CD4-positive, alpha-beta memory T cell (primary cell): ENCODE measurements at regions of chr19 and their contacts with region 1.

Region 1: DNA sequence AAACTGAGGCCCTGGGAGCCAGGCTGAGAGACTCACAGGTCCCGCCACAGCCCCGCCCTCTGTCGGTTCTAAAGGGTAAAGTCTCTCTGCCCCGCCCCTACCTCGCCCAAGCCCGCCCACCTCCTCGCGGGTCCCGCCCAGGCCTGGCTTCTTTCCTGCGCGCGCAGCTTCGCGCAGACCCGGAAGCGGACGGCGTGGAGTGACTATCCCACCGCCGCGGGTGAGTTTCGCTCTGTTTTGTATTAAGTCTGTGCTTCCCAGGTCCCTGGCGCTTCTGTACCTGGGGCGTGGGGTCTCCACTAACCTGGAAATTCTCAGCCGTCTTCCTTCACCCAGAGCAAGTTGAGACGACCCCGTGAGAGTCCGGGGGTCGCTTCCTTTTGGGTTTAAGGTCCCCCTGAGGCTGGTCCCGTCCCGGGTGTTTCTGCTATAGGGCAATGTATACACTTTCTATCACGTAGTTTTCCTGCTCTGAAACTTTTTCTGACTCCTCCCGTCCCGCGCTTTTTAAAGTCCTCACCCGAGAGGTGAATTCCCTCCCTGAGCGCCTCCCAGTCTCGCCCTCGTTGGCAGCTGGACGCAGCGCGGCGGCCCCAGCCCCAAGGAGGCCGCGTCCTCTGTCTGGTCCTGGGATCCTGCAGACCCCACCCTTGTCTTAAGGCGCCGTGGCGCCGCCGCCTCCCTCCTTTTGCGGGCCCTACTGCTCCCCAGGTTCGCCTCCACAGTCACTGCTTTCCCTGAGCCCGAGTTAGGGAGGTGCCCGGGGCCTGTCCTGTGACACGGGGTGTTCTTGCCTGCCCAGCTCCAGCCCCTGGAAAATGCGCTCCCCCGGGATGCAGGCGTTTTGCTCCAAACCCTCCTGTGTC is at the start of gene ZNF765:
- DNase-seq: peak; percentile 93 to 98 (median 95)
- H3K4me3 ChIP-seq: peak within 1 kb of the TSS; percentile 69 to 70
- H3K4me3 Mint-ChIP-seq: peak within 1 kb of the TSS; percentile 92 to 99 (median 98)
- H3K27ac ChIP-seq: peak within 1 kb of the TSS; percentile 75
- H3K27ac Mint-ChIP-seq: peak within 1 kb of the TSS; percentile 91 to 98 (median 96)
- H3K4me1 ChIP-seq: peaks cover 20% of the 10 kb centered on the region
- H3K4me1 Mint-ChIP-seq: peaks cover 18 to 41% (median 29%) of the 10 kb centered on the region in 4 donors
- H3K27me3 ChIP-seq: no peaks in the 10 kb centered on the region
- H3K27me3 Mint-ChIP-seq: no peaks in the 10 kb centered on the region
- total RNA-seq, gene ZNF765: 20.9 to 21.6 TPM

Region 2: DNA sequence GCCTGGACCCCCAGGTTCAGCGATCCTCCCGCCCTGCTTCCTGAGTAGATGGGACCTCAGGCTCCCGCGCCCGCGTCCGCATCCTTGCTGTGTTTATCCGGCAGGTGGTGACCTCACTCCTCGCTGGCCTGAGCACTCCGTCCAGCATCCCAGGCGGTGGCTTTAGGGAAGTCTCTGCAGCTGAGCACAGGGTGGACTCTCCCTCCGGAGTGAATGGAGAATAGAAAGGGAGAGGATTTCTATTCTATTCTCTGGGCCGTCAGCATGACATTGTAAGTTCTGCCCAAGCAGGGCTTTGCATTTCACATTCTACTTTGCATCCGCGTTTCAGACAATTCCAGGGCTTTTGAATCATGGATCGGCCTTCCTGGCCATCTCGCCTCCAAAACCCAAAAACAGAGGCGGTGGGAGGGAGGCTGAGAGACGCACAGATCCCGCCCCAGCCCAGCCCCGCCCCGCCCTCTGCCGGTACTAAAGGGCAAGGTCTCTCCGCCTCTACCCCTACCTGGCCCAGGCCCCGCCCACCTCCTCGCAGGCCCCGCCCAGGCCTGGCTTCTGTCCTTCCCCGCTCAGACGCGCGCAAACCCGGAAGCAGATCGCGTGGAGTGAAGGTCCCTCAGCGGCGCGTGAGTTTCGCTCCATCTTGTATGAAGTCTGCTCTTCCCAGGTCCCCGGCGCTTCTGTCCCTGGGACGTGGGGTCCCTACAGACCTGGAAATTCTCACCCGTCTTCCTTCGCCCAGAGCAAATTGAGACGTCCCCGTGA is 29.9 kb before region 1 on chr19 and contains the start of gene ZNF525:
- CTCF ChIA-PET with region 1: no interaction called
- POLR2A ChIA-PET with region 1: no interaction called
- intact Hi-C with region 1: loop called (anchors 1 kb)
- DNase-seq: peak; percentile 93 to 97 (median 96)
- H3K4me3 ChIP-seq: peak within 1 kb of the TSS; percentile 57 to 87
- H3K4me3 Mint-ChIP-seq: peak within 1 kb of the TSS; percentile 95 to 99 (median 96)
- H3K27ac ChIP-seq: peak within 1 kb of the TSS; percentile 70
- H3K27ac Mint-ChIP-seq: peak within 1 kb of the TSS; percentile 90 to 98 (median 97)
- H3K4me1 ChIP-seq: peaks cover 6% of the 10 kb centered on the region
- H3K4me1 Mint-ChIP-seq: peaks cover 15 to 38% (median 21%) of the 10 kb centered on the region in 4 donors
- H3K27me3 ChIP-seq: no peaks in the 10 kb centered on the region
- H3K27me3 Mint-ChIP-seq: no peaks in the 10 kb centered on the region
- total RNA-seq, gene ZNF525: 36.5 to 36.6 TPM

Region 3: DNA sequence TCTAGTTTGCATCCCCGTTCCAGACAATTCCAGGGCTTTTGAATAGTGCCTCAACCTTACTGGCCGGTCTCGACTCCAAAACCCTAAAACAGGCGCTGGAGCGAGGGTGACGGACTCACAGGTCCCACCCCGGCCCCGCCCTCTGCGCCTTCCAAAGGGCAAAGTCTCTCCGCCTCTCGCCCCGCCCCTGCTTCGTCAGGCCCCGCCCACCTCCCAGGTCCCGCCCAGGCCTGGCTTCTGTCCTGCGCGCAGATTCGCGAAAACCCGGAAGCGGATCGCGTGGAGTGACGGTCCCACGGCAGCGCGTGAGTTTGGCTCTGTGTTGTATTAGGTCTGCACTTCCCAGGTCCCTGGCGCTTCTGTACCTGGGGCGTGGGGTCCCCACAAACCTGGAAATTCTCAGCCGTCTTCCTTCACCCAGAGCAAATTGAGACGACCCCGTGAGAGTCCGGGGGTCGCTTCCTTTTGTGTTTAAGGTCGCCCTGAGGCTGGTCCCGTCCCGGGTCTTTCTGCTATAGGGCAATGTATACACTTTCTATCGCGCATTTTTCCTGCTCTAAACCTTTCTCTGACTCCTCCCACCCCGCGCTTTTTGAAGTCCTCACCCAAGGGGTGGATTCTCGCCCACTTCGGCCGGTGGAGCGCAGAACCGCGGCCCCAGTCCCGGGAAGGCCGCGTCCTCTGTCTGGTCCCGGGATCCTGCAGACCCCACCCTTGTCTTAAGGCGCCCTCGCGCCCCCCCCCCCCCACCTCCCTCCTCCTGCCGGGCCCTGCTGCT is 72.5 kb after region 1 on chr19 and contains the start of gene ZNF813:
- CTCF ChIA-PET with region 1: no interaction called
- POLR2A ChIA-PET with region 1: no interaction called
- intact Hi-C with region 1: loop called (anchors 1 kb)
- DNase-seq: peak; percentile 88 to 96 (median 91)
- H3K4me3 ChIP-seq: peak within 1 kb of the TSS; percentile 57 to 62
- H3K4me3 Mint-ChIP-seq: peak within 1 kb of the TSS; percentile 89 to 96 (median 93)
- H3K27ac ChIP-seq: peak within 1 kb of the TSS; percentile 51
- H3K27ac Mint-ChIP-seq: peak within 1 kb of the TSS; percentile 83 to 94 (median 91)
- H3K4me1 ChIP-seq: peaks cover 13% of the 10 kb centered on the region
- H3K4me1 Mint-ChIP-seq: peaks cover 14 to 45% (median 25%) of the 10 kb centered on the region in 4 donors
- H3K27me3 ChIP-seq: no peaks in the 10 kb centered on the region
- H3K27me3 Mint-ChIP-seq: peaks cover 8 to 9% of the 10 kb centered on the region in 2 donors
- total RNA-seq, gene ZNF813: 9.4 to 10.1 TPM